ENCODE measurements at regions of chr12 and their contacts with region 1.

Region 1: DNA sequence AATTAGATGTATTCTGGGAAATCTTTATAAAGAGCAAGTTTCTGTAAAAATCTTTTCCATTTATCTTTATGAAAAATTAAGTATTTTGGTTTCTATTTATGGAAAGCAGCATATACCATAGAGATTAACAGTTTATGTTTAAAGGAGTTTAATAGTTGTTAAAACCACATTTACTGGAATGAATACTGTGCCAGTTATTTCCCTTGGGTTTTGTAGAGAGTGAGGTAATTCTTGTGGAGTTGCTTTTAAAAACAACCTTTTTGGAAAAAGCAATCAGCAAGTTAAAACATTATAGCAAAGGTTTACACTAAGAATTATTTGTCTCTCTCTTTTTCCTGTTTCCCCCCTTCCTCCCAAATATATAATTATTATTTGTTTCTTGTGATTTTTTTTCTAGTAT is 34.9 kb downstream of the AEBP2 start:
- DNase-seq: no peak
- ATAC-seq: no peak
- H3K4me3 Mint-ChIP-seq: no peak overlapping the region
- H3K27ac Mint-ChIP-seq: no peak overlapping the region
- H3K4me1 Mint-ChIP-seq: peaks cover 7% of the 10 kb centered on the region
- H3K27me3 Mint-ChIP-seq: no peaks in the 10 kb centered on the region
- CTCF ChIP-seq: no peak

Region 2: GRCh38 chr12:19299765-19300164 is 174.4 kb before region 1 on chr12:
- CTCF ChIA-PET with region 1: no interaction called
- POLR2A ChIA-PET with region 1: no interaction called
- intact Hi-C with region 1: no loop called
- DNase-seq: no peak
- ATAC-seq: no peak
- H3K4me3 Mint-ChIP-seq: no peak overlapping the region
- H3K27ac Mint-ChIP-seq: no peak overlapping the region
- H3K4me1 Mint-ChIP-seq: no peaks in the 10 kb centered on the region
- H3K27me3 Mint-ChIP-seq: no peaks in the 10 kb centered on the region
- CTCF ChIP-seq: no peak

Region 3: GRCh38 chr12:19489168-19489567 is 15.0 kb after region 1 on chr12:
- CTCF ChIA-PET with region 1: no interaction called
- POLR2A ChIA-PET with region 1: no interaction called
- intact Hi-C with region 1: loop called (anchors 2 kb)
- DNase-seq: no peak
- ATAC-seq: no peak
- H3K4me3 Mint-ChIP-seq: no peak overlapping the region
- H3K27ac Mint-ChIP-seq: no peak overlapping the region
- H3K4me1 Mint-ChIP-seq: peaks cover 25% of the 10 kb centered on the region
- H3K27me3 Mint-ChIP-seq: no peaks in the 10 kb centered on the region
- CTCF ChIP-seq: no peak

Region 4: DNA sequence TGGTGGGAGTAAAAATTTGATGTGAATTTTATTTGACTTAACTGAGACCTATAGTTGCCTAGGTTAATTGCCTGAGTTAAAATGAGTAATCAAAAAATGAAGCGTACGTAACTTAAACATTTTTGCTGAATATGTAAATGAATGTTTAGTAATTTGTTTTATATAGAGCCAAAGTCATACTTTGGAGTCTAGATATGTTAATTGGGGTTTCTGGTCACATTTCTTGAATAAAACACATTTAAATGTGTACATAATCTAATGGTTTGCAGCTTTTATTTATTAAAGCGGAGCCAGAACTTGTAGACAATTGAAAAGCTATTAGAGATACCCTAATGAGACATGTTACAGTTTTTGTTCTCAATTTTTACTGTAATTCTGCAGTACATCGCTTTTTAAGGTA is 36.3 kb after region 1 on chr12:
- CTCF ChIA-PET with region 1: no interaction called
- POLR2A ChIA-PET with region 1: no interaction called
- intact Hi-C with region 1: loop called (anchors 5 kb)
- DNase-seq: no peak
- ATAC-seq: no peak
- H3K4me3 Mint-ChIP-seq: no peak overlapping the region
- H3K27ac Mint-ChIP-seq: no peak overlapping the region
- H3K4me1 Mint-ChIP-seq: peaks cover 15% of the 10 kb centered on the region
- H3K27me3 Mint-ChIP-seq: no peaks in the 10 kb centered on the region
- CTCF ChIP-seq: no peak

Measured in activated B cell treated with CpG ODN at 0.5 μM for 24 hours (primary cell).